ENCODE measurements at regions of chr3 and their contacts with region 1.

Region 1: DNA sequence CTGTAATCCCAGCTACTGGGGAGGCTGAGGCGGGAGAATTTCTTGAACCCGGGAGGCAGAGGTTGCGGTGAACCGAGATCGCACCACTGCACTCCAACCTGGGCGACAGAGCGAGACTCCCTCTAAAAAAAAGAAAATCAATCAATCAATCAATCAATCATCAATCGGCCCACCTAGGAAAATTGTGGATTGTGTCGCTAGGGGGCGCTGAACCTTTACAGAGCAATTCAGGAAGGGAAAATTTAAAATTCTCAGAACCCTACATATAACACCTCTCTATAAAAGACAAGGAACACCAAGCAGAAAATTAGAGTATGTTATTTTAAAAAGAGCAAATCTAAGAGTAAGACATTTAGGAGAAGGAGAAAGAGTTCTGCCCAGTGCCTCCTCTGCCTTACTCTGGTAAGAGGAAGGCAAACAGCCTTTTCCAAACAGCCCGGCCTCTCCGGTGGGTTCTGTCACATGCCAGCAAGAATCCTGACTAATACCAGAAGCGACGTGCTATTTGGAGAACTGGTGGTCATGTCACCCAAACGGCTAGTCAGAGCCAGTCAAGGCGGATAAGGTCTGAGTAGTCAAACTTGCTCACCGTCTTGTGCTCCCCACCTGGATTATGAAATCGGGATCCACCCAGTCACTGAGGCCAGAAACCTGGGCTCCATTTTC is 22.3 kb upstream of the SMCO1 start:
- DNase-seq: peak in 1 of 2 donors; percentile 27
- ATAC-seq: peak in 1 of 4 donors; percentile 40
- H3K4me3 ChIP-seq: no peak overlapping the region
- H3K27ac ChIP-seq: no peak overlapping the region
- H3K4me1 ChIP-seq: no peaks in the 10 kb centered on the region
- H3K27me3 ChIP-seq: peaks cover 0 to 7% (median 2%) of the 10 kb centered on the region in 3 donors
- CTCF ChIP-seq: peak; percentile 52

Region 2: DNA sequence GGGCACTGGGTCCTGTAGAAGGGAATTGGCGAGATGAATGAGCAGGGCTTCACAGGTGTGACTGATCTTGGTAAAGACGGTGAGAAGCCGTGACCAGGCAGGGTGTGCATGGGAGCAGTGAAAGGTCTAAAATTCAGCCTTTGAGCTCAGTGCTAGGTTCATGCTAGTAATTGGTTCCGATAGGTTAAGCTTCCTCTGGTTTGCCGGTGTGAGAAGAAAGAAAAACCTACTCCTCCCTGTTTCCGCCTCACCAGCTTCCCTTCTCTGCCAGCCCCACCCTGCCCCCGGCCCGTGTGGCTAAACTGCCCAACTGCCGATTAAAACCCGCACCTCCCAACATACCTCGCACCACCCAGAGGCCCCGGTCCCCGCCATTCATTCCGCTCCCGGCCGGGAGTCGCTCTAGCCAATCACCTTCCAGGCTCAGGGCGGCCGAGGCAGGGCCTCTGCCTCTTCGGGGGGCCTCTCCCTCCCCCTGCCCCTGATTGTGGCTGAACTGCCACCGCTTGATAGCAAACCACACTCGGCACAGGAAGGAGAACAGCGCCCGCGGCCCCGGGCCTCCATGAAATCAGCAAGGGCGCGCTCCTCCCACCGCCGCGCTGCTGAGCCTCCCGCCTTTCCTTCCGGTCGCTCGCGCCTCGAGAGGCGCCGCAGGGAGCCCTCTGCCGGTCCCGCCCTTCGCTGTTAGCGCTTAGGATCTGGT is 94.7 kb after region 1 on chr3:
- intact Hi-C with region 1: loop called (anchors 2 to 10 kb)
- DNase-seq: peak; percentile 85 to 89
- ATAC-seq: peak; percentile 92 to 99 (median 94)
- H3K4me3 ChIP-seq: peak overlapping the region; percentile 77
- H3K27ac ChIP-seq: peak overlapping the region; percentile 69
- H3K4me1 ChIP-seq: peaks cover 6% of the 10 kb centered on the region
- H3K27me3 ChIP-seq: peaks cover 0 to 10% (median 0%) of the 10 kb centered on the region in 3 donors
- CTCF ChIP-seq: peak; percentile 41

Measured in psoas muscle (tissue), 8 donors.